Calu3 (cell line): ENCODE measurements at regions of chr16 and their contacts with region 1.

Region 1: GRCh38 chr16:2838928-2839327 is 8.8 kb downstream of the ZG16B start:
- DNase-seq: peak; percentile 84
- H3K4me3 Mint-ChIP-seq: no peak overlapping the region
- H3K27ac Mint-ChIP-seq: peak overlapping the region; percentile 18
- H3K4me1 Mint-ChIP-seq: peaks cover 51% of the 10 kb centered on the region
- H3K27me3 Mint-ChIP-seq: no peaks in the 10 kb centered on the region
- CTCF ChIP-seq: peak; percentile 88

Region 2: GRCh38 chr16:2777231-2777902 is 61.6 kb before region 1 on chr16 and contains the start of gene ELOB:
- CTCF ChIA-PET with region 1: interaction called, 3 read pairs
- intact Hi-C with region 1: loop called (anchors 5 kb)
- DNase-seq: peak; percentile 94
- H3K4me3 Mint-ChIP-seq: peak within 1 kb of the TSS; percentile 93
- H3K27ac Mint-ChIP-seq: peak within 1 kb of the TSS; percentile 89
- H3K4me1 Mint-ChIP-seq: peaks cover 17% of the 10 kb centered on the region
- H3K27me3 Mint-ChIP-seq: no peaks in the 10 kb centered on the region
- CTCF ChIP-seq: no peak
- total RNA-seq, gene ELOB: 269 TPM in 2 replicates

Region 3: DNA sequence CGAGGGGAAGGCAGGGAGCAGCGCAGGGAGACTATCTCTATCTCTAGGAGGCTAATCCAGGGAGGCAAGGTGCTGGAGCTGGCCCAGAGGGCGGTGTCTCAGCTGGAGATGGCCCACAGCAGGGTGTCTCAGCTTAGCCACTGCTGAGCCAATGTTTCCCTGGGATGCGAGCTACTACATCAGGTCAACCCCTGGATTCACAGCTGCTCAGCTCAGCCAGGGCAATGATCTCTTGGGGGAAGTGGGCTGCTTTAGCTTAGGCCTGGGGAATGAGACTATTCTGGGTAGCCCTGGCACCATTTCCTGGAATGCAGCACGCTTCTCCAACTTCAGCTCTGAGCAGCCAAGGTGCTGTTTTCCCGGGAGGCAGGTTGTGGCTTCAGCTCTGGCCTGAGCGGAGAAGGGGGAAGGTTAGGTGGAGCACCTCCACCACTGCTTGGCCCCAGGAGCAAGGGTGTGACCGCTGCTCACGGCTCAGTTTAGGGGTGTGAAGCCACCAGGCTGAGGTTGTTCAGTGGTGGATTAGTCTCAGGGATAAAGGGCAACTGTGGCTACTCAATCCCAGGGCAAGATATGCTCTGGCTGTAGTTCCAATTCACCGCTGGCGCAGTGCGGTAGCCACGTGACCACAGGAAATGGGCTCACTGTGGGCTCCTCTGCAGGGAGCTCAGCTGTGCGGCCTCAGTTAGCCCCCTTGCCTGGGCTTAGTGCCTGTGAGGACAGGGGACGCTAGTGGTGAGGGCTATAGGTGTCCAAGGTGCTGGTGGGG is 27.0 kb before region 1 on chr16:
- CTCF ChIA-PET with region 1: no interaction called
- intact Hi-C with region 1: no loop called
- DNase-seq: no peak
- H3K4me3 Mint-ChIP-seq: no peak overlapping the region
- H3K27ac Mint-ChIP-seq: no peak overlapping the region
- H3K4me1 Mint-ChIP-seq: no peaks in the 10 kb centered on the region
- H3K27me3 Mint-ChIP-seq: peaks cover 13% of the 10 kb centered on the region
- CTCF ChIP-seq: no peak

Region 4: GRCh38 chr16:2858265-2859025 is 19.5 kb after region 1 on chr16:
- CTCF ChIA-PET with region 1: interaction called, 21 read pairs
- intact Hi-C with region 1: no loop called
- DNase-seq: peak; percentile 98
- H3K4me3 Mint-ChIP-seq: peak overlapping the region; percentile 90
- H3K27ac Mint-ChIP-seq: peak overlapping the region; percentile 88
- H3K4me1 Mint-ChIP-seq: peaks cover 17% of the 10 kb centered on the region
- H3K27me3 Mint-ChIP-seq: no peaks in the 10 kb centered on the region
- CTCF ChIP-seq: peak; percentile 56

Region 5: DNA sequence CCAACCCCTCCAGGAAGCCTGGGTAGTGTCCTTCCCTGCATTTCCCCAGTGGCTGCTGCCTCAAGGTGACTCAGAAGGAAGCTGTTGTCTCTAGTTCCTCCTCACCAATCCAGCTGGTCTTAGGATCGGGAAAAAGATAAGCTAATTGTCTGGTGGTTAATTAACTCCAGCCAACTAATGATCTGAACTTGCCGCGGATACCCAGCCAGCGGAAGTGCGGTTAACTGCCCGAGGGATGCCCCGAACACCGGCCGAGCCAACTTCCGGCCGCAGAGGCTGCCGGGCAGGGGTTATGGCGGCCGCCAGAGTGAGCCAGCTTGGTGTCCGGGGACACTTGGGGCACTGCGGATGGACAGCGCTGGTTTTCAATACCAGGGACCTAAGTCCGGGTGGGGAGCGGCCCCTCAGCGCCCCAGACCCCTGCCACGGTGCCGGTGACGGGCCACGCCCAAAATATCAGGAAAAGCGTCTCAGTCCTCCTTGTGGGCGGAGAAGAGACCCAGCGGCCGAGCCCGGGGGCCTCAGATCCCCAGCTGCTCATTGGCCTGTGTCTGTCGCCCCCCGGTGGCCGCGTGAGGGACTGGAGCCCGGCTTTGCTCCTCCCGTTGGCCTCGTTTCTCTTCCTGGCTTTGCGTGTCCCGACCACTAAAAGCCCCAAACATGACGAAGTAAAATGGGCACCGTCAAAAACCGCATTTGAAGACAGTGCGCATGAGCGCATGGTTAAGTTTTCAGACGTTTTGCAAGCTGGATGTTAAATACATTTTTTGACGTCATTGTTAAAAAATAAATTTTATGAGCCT is 29.3 kb after region 1 on chr16:
- CTCF ChIA-PET with region 1: interaction called, 64 read pairs
- intact Hi-C with region 1: loop called (anchors 1 kb)
- DNase-seq: peak; percentile 99
- H3K4me3 Mint-ChIP-seq: peak overlapping the region; percentile 88
- H3K27ac Mint-ChIP-seq: peak overlapping the region; percentile 83
- H3K4me1 Mint-ChIP-seq: no peaks in the 10 kb centered on the region
- H3K27me3 Mint-ChIP-seq: no peaks in the 10 kb centered on the region
- CTCF ChIP-seq: peak; percentile 97

Region 6: DNA sequence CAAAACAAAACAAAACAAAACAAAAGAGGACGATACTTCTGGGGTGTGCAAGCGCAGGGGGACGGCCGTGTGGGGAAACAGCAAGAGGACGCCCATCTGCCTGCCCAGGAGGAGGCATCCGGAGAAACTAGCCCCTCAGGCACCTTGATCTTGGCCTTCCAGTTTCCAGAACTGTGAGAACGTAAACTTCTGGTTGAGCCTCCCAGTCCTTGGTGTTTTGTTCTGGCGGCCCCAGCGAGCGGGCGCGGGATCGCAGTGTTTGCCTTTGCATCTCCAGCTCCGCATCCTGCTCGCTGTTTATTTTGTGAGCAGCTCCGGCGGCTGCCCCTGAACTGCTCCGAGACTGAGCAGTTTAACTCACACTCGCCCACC is 206.4 kb after region 1 on chr16:
- CTCF ChIA-PET with region 1: no interaction called
- intact Hi-C with region 1: no loop called
- DNase-seq: peak; percentile 48
- H3K4me3 Mint-ChIP-seq: peak overlapping the region; percentile 63
- H3K27ac Mint-ChIP-seq: no peak overlapping the region
- H3K4me1 Mint-ChIP-seq: no peaks in the 10 kb centered on the region
- H3K27me3 Mint-ChIP-seq: peaks cover 64% of the 10 kb centered on the region
- CTCF ChIP-seq: no peak